A673 (cell line): ENCODE measurements at regions of chr2 and their contacts with region 1.

Region 1: GRCh38 chr2:213806125-213806726 is 522.0 kb downstream of the SPAG16 start:
- DNase-seq: peak; percentile 42
- H3K4me3 ChIP-seq: no peak overlapping the region
- H3K27ac ChIP-seq: no peak overlapping the region
- H3K4me1 ChIP-seq: no peaks in the 10 kb centered on the region
- H3K27me3 ChIP-seq: no peaks in the 10 kb centered on the region
- CTCF ChIP-seq: peak; percentile 64

Region 2: GRCh38 chr2:213376644-213377043 is 429.6 kb before region 1 on chr2:
- CTCF ChIA-PET with region 1: no interaction called
- POLR2A ChIA-PET with region 1: no interaction called
- intact Hi-C with region 1: no loop called
- DNase-seq: no peak
- H3K4me3 ChIP-seq: no peak overlapping the region
- H3K27ac ChIP-seq: no peak overlapping the region
- H3K4me1 ChIP-seq: no peaks in the 10 kb centered on the region
- H3K27me3 ChIP-seq: no peaks in the 10 kb centered on the region
- CTCF ChIP-seq: no peak

Region 3: DNA sequence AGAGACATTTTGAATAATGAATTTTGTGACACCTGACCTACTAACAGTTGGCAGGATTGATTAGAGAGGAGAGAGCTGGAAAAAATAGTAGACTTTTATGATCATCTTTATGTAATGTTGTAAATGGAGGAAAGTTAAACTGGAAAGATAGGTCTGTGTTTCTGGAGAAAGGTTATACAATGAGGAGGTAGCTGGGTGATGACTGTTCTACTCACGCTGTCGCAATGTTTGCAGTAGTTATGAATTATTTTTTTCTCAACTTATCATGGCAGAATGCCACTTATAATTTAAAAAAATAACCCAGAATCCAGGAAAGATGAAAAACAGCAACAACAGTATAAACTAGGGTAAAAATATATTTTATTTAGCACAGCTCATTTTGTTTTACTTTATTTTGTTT is 157.0 kb before region 1 on chr2:
- CTCF ChIA-PET with region 1: no interaction called
- POLR2A ChIA-PET with region 1: no interaction called
- intact Hi-C with region 1: no loop called
- DNase-seq: no peak
- H3K4me3 ChIP-seq: no peak overlapping the region
- H3K27ac ChIP-seq: no peak overlapping the region
- H3K4me1 ChIP-seq: no peaks in the 10 kb centered on the region
- H3K27me3 ChIP-seq: no peaks in the 10 kb centered on the region
- CTCF ChIP-seq: no peak

Region 4: DNA sequence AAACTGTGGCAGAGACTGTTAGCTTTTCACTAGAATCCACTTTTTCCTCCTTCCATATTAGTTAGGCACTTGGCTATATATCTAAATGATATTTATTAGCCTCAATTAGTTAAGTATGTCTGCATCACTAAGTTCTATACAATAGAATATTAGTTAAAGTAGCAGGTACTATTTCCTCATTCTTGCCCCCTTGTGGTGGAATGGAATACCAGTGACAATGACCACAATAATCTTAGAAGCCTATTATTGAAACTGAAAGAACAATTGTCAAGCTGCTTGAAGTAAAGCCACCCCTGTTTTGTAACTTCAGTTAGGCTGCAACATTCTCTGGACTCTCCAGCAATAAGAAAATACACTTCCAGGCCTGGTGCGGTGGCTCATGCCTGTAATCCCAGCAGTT is 128.3 kb after region 1 on chr2:
- CTCF ChIA-PET with region 1: no interaction called
- POLR2A ChIA-PET with region 1: no interaction called
- intact Hi-C with region 1: loop called (anchors 5 kb)
- DNase-seq: peak; percentile 42
- H3K4me3 ChIP-seq: no peak overlapping the region
- H3K27ac ChIP-seq: no peak overlapping the region
- H3K4me1 ChIP-seq: no peaks in the 10 kb centered on the region
- H3K27me3 ChIP-seq: no peaks in the 10 kb centered on the region
- CTCF ChIP-seq: peak; percentile 63